ENCODE measurements at regions of chr11 and their contacts with region 1.

Region 1: DNA sequence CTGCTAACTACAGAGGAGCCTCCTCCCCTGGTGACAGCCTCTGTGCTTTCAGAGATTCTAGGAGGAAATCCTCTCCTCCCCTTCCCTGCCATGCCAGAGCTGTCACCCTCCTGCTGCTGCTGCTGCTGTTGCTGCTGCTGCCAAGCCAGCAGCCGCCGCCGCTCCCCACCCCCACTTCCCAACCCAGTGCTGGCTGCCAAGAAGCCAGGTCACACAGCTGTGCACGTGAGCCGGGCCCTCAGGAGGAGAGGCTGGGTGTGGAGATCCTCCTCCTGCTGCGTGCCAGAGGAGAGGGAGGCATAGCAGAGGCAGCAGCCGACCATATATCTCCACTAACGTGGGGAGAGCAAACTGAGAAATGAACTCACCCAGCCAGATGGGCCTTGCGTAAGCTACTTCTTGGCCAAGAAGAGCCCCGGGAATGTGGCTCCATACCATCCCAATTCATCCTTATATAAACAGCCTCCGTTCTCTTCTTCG is 12.4 kb downstream of the CRY2 start:
- DNase-seq: peak; percentile 97
- H3K4me3 ChIP-seq: no peak overlapping the region
- H3K27ac ChIP-seq: peak overlapping the region; percentile 70
- H3K4me1 ChIP-seq: peaks cover 37% of the 10 kb centered on the region
- H3K27me3 ChIP-seq: no peaks in the 10 kb centered on the region
- CTCF ChIP-seq: no peak

Region 2: DNA sequence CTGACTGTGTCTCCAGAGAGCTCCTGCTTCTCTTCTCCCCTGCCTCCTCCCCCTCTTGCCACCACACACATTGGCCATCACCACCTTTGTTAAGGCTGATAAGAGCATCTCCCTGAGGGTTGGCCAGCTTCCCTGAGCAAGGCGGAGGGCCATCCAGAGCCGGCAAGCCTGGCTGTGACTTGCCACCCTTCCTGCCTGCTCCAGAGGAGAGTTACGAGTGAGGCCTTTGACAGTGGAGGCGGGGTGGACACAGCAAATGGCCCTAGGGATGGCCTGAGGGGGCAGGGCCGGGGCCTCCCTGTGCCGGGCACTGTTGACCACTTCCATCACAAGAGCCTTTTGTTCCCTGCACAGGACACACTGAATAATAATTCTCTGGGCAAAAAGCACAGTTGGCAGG is 41.9 kb after region 1 on chr11:
- CTCF ChIA-PET with region 1: no interaction called
- POLR2A ChIA-PET with region 1: no interaction called
- intact Hi-C with region 1: loop called (anchors 1 kb)
- DNase-seq: no peak
- H3K4me3 ChIP-seq: no peak overlapping the region
- H3K27ac ChIP-seq: no peak overlapping the region
- H3K4me1 ChIP-seq: peaks cover 20% of the 10 kb centered on the region
- H3K27me3 ChIP-seq: no peaks in the 10 kb centered on the region
- CTCF ChIP-seq: no peak